WTC11 (cell line): ENCODE measurements at regions of chr6 and their contacts with region 1.

Region 1: DNA sequence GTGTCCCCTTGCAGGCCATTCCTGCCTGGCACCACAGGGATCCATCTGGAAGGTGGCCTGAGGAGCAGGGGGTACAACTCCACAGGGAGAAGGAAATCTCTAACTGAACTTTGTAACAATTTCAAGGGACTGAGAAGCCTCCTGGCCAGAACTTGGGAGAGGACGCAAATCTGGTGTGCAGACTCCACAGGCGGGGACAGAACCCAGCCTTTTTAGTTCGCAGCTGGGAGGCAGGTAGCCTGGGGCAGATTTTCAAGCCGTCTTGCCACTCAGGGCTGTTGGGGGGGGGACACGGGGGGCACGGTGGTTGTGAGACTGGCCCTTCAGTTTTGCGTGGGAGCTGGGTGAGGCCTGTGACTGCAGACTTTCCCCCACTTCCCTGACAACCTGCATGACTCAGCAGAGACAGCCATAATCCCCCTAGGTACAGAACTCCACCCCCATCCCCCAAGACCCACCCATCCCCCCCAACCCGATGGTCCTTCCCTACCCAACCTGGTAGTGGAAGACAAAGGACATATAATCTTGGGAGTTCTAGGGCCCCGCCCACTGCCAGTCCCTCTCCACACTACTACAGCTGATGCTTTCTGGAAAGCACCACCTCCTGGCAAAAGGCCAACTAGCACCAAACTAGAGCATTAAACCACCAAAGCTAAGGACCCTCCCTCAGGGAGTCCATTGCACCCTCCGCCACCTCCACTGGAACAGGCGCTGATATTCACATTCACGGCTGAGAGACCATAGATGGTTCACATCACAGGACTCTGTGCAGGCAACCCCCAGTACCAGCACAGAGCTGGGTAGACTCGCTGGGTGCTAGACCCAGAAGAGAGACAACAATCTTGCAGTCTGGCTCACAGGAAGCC is 3.0 kb upstream of the HUS1B start:
- DNase-seq: peak; percentile 75
- ATAC-seq: peak; percentile 62
- H3K4me3 Mint-ChIP-seq: peak overlapping the region; percentile 33
- H3K27ac Mint-ChIP-seq: peak overlapping the region; percentile 94
- H3K4me1 Mint-ChIP-seq: peaks cover 84% of the 10 kb centered on the region
- H3K27me3 Mint-ChIP-seq: no peaks in the 10 kb centered on the region
- CTCF ChIP-seq: no peak

Region 2: GRCh38 chr6:624979-625378 is 35.0 kb before region 1 on chr6:
- CTCF ChIA-PET with region 1: interaction called, 10 read pairs
- POLR2A ChIA-PET with region 1: no interaction called
- DNase-seq: no peak
- ATAC-seq: peak; percentile 84
- H3K4me3 Mint-ChIP-seq: no peak overlapping the region
- H3K27ac Mint-ChIP-seq: peak overlapping the region; percentile 93
- H3K4me1 Mint-ChIP-seq: peaks cover 46% of the 10 kb centered on the region
- H3K27me3 Mint-ChIP-seq: no peaks in the 10 kb centered on the region
- CTCF ChIP-seq: no peak

Region 3: GRCh38 chr6:692855-693722 is 33.1 kb after region 1 on chr6 and contains the start of gene EXOC2:
- CTCF ChIA-PET with region 1: interaction called, 12 read pairs
- POLR2A ChIA-PET with region 1: no interaction called
- DNase-seq: peak; percentile 90
- ATAC-seq: peak; percentile 83
- H3K4me3 Mint-ChIP-seq: peak within 1 kb of the TSS; percentile 92
- H3K27ac Mint-ChIP-seq: peak within 1 kb of the TSS; percentile 83
- H3K4me1 Mint-ChIP-seq: peaks cover 23% of the 10 kb centered on the region
- H3K27me3 Mint-ChIP-seq: no peaks in the 10 kb centered on the region
- CTCF ChIP-seq: no peak
- total RNA-seq, gene EXOC2: 39.6 to 45.7 TPM (median 40.2 TPM) in 3 replicates

Region 4: DNA sequence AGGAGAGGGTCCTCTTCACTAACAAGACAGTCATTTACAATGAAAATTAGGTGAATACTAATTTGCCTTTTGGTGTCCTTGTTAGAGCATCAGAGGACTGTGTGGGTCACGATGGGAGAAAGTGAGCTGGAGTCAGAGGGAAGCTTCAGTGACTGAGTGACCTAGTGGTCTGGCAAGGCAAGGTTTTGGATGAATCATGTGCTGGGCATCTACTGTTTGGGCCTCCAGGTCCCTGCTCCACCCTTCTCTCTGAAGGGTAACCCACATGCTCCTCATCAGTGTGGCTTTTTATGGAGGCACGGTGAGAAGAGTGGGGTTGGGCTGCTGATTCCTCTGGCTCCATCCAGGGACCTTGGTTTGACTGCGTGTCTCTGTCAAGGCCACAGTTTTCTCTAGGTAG is 93.5 kb after region 1 on chr6:
- CTCF ChIA-PET with region 1: no interaction called
- POLR2A ChIA-PET with region 1: no interaction called
- DNase-seq: no peak
- ATAC-seq: no peak
- H3K4me3 Mint-ChIP-seq: no peak overlapping the region
- H3K27ac Mint-ChIP-seq: no peak overlapping the region
- H3K4me1 Mint-ChIP-seq: peaks cover 5% of the 10 kb centered on the region
- H3K27me3 Mint-ChIP-seq: no peaks in the 10 kb centered on the region; the same call in 1 of the 2 replicates
- CTCF ChIP-seq: no peak